Sciatic nerve (tissue), 2 donors: ENCODE measurements at regions of chr5 and their contacts with region 1.

Region 1: GRCh38 chr5:151126199-151126645 is 31.4 kb downstream of the ANXA6 start:
- DNase-seq: peak; percentile 81
- ATAC-seq: peak; percentile 80

Region 2: GRCh38 chr5:150931368-150931965 is 194.8 kb before region 1 on chr5:
- intact Hi-C with region 1: no loop called
- DNase-seq: no peak
- ATAC-seq: no peak

Region 3: GRCh38 chr5:151037561-151038411 is 88.4 kb before region 1 on chr5:
- intact Hi-C with region 1: no loop called
- DNase-seq: no peak
- ATAC-seq: peak; percentile 79

Region 4: GRCh38 chr5:151164686-151165392 is 38.6 kb after region 1 on chr5:
- intact Hi-C with region 1: loop called (anchors 5 kb)
- DNase-seq: peak; percentile 86
- ATAC-seq: peak; percentile 92